Common myeloid progenitor, CD34-positive (primary cell): ENCODE measurements at regions of chr1 and their contacts with region 1.

Region 1: GRCh38 chr1:226062558-226063223 is at the start of gene H3-3A:
- DNase-seq: peak; percentile 93 to 97 (median 96)
- H3K4me3 ChIP-seq: peak within 1 kb of the TSS; percentile 85 to 100 (median 95)
- H3K27ac ChIP-seq: peak within 1 kb of the TSS; percentile 94 to 98
- H3K4me1 ChIP-seq: peaks cover 32 to 47% (median 36%) of the 10 kb centered on the region in 4 experiments
- H3K27me3 ChIP-seq: no peaks in the 10 kb centered on the region

Region 2: GRCh38 chr1:225338545-225338944 is 724.1 kb before region 1 on chr1:
- CTCF ChIA-PET with region 1: no interaction called
- POLR2A ChIA-PET with region 1: no interaction called
- DNase-seq: no peak
- H3K4me3 ChIP-seq: no peak overlapping the region
- H3K27ac ChIP-seq: no peak overlapping the region
- H3K4me1 ChIP-seq: no peaks in the 10 kb centered on the region
- H3K27me3 ChIP-seq: no peaks in the 10 kb centered on the region

Region 3: GRCh38 chr1:225987491-225988316 is 75.0 kb before region 1 on chr1:
- CTCF ChIA-PET with region 1: interaction called, 61 read pairs
- POLR2A ChIA-PET with region 1: interaction called, 6 read pairs
- DNase-seq: peak; percentile 66 to 76 (median 74)
- H3K4me3 ChIP-seq: peak overlapping the region in 1 of 7 experiments; percentile 28
- H3K27ac ChIP-seq: no peak overlapping the region
- H3K4me1 ChIP-seq: peaks cover 0 to 4% (median 1%) of the 10 kb centered on the region in 4 experiments
- H3K27me3 ChIP-seq: no peaks in the 10 kb centered on the region

Region 4: GRCh38 chr1:226004396-226004795 is 58.3 kb before region 1 on chr1:
- CTCF ChIA-PET with region 1: interaction called, 15 read pairs
- POLR2A ChIA-PET with region 1: interaction called, 76 read pairs
- DNase-seq: no peak
- H3K4me3 ChIP-seq: no peak overlapping the region
- H3K27ac ChIP-seq: no peak overlapping the region
- H3K4me1 ChIP-seq: peaks cover 37 to 52% (median 46%) of the 10 kb centered on the region in 4 experiments
- H3K27me3 ChIP-seq: no peaks in the 10 kb centered on the region

Region 5: GRCh38 chr1:226044514-226045101 is 18.1 kb before region 1 on chr1:
- CTCF ChIA-PET with region 1: interaction called, 10 read pairs
- POLR2A ChIA-PET with region 1: interaction called, 3 read pairs
- DNase-seq: no peak
- H3K4me3 ChIP-seq: no peak overlapping the region
- H3K27ac ChIP-seq: no peak overlapping the region
- H3K4me1 ChIP-seq: peaks cover 0 to 8% (median 0%) of the 10 kb centered on the region in 4 experiments
- H3K27me3 ChIP-seq: no peaks in the 10 kb centered on the region

Region 6: GRCh38 chr1:226100436-226101391 is 38.0 kb after region 1 on chr1:
- CTCF ChIA-PET with region 1: interaction called, 10 read pairs
- POLR2A ChIA-PET with region 1: no interaction called
- DNase-seq: peak; percentile 47 to 85 (median 76)
- H3K4me3 ChIP-seq: peak overlapping the region in 6 of 7 experiments; percentile 54 to 90 (median 66)
- H3K27ac ChIP-seq: peak overlapping the region in 1 of 2 experiments; percentile 70
- H3K4me1 ChIP-seq: peaks cover 5 to 13% (median 10%) of the 10 kb centered on the region in 4 experiments
- H3K27me3 ChIP-seq: no peaks in the 10 kb centered on the region

Region 7: GRCh38 chr1:226149806-226150205 is 87.1 kb after region 1 on chr1:
- CTCF ChIA-PET with region 1: no interaction called
- POLR2A ChIA-PET with region 1: no interaction called
- DNase-seq: peak; percentile 36 to 74 (median 62)
- H3K4me3 ChIP-seq: no peak overlapping the region
- H3K27ac ChIP-seq: no peak overlapping the region
- H3K4me1 ChIP-seq: no peaks in the 10 kb centered on the region
- H3K27me3 ChIP-seq: no peaks in the 10 kb centered on the region